A673 (cell line): ENCODE measurements at regions of chr4 and their contacts with region 1.

Region 1: DNA sequence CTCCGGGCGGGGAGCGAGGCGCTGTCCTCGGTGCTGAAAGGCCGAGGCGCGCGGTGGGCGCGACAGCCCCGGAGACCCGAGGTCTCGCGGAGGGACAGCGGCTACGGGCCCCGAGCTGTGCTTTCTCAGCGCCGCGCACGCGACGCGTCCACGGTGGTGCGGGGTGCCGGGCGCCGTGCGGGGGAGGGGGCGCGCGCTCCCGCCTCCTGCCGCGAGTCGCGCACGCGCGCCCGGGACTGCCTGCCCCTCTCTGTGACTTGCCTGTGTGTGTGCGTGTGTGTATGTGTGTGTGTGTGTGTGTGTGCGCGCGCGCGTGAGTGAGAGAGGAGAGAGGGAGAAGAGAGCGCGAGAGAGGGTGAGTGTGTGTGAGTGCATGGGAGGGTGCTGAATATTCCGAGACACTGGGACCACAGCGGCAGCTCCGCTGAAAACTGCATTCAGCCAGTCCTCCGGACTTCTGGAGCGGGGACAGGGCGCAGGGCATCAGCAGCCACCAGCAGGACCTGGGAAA is at the start of gene GRIA2:
- DNase-seq: peak; percentile 80
- H3K4me3 ChIP-seq: peak within 1 kb of the TSS; percentile 59
- H3K27ac ChIP-seq: no peak within 1 kb of the TSS
- H3K4me1 ChIP-seq: peaks cover 6% of the 10 kb centered on the region
- H3K27me3 ChIP-seq: peaks cover 23% of the 10 kb centered on the region
- CTCF ChIP-seq: no peak
- total RNA-seq, gene GRIA2: 0.32 and 0.42 TPM in 2 replicates

Region 2: GRCh38 chr4:156870131-156870530 is 350.3 kb before region 1 on chr4:
- CTCF ChIA-PET with region 1: no interaction called
- POLR2A ChIA-PET with region 1: no interaction called
- intact Hi-C with region 1: no loop called
- DNase-seq: no peak
- H3K4me3 ChIP-seq: peak overlapping the region; percentile 9
- H3K27ac ChIP-seq: peak overlapping the region; percentile 69
- H3K4me1 ChIP-seq: peaks cover 46% of the 10 kb centered on the region
- H3K27me3 ChIP-seq: no peaks in the 10 kb centered on the region
- CTCF ChIP-seq: no peak

Region 3: GRCh38 chr4:157165935-157166610 is 54.4 kb before region 1 on chr4:
- CTCF ChIA-PET with region 1: no interaction called
- POLR2A ChIA-PET with region 1: no interaction called
- intact Hi-C with region 1: loop called (anchors 2 kb)
- DNase-seq: no peak
- H3K4me3 ChIP-seq: no peak overlapping the region
- H3K27ac ChIP-seq: no peak overlapping the region
- H3K4me1 ChIP-seq: peaks cover 10% of the 10 kb centered on the region
- H3K27me3 ChIP-seq: no peaks in the 10 kb centered on the region
- CTCF ChIP-seq: no peak

Region 4: GRCh38 chr4:157514711-157515110 is 294.3 kb after region 1 on chr4:
- CTCF ChIA-PET with region 1: no interaction called
- POLR2A ChIA-PET with region 1: no interaction called
- intact Hi-C with region 1: loop called (anchors 5 kb)
- DNase-seq: peak; percentile 19
- H3K4me3 ChIP-seq: no peak overlapping the region
- H3K27ac ChIP-seq: no peak overlapping the region
- H3K4me1 ChIP-seq: no peaks in the 10 kb centered on the region
- H3K27me3 ChIP-seq: no peaks in the 10 kb centered on the region
- CTCF ChIP-seq: peak; percentile 52

Region 5: DNA sequence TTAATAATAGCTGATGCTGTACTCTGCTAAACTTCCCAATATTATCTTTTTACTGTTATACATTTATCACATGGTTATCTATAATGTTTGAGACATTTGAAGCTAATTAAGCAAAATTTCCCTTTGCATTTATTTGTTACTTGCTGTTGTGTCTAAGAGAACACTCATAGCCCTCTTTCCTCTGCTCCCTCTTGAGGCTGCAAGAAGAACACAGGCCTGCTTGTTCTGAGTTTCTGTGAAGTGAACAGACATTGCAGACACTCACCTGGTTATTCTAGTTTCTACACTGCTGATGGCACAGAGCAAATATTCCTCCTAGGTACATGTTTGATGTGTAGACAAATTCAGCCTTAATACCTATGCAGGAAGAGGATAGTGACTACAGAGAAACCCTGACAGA is 584.6 kb after region 1 on chr4:
- CTCF ChIA-PET with region 1: no interaction called
- POLR2A ChIA-PET with region 1: no interaction called
- intact Hi-C with region 1: loop called (anchors 10 kb)
- DNase-seq: peak; percentile 9
- H3K4me3 ChIP-seq: no peak overlapping the region
- H3K27ac ChIP-seq: no peak overlapping the region
- H3K4me1 ChIP-seq: peaks cover 23% of the 10 kb centered on the region
- H3K27me3 ChIP-seq: no peaks in the 10 kb centered on the region
- CTCF ChIP-seq: peak; percentile 56

Region 6: GRCh38 chr4:157978680-157979361 is 758.4 kb after region 1 on chr4:
- CTCF ChIA-PET with region 1: interaction called, 3 read pairs
- POLR2A ChIA-PET with region 1: no interaction called
- intact Hi-C with region 1: loop called (anchors 2 kb)
- DNase-seq: peak; percentile 89
- H3K4me3 ChIP-seq: peak overlapping the region; percentile 23
- H3K27ac ChIP-seq: no peak overlapping the region
- H3K4me1 ChIP-seq: peaks cover 22% of the 10 kb centered on the region
- H3K27me3 ChIP-seq: no peaks in the 10 kb centered on the region
- CTCF ChIP-seq: peak; percentile 85

Region 7: DNA sequence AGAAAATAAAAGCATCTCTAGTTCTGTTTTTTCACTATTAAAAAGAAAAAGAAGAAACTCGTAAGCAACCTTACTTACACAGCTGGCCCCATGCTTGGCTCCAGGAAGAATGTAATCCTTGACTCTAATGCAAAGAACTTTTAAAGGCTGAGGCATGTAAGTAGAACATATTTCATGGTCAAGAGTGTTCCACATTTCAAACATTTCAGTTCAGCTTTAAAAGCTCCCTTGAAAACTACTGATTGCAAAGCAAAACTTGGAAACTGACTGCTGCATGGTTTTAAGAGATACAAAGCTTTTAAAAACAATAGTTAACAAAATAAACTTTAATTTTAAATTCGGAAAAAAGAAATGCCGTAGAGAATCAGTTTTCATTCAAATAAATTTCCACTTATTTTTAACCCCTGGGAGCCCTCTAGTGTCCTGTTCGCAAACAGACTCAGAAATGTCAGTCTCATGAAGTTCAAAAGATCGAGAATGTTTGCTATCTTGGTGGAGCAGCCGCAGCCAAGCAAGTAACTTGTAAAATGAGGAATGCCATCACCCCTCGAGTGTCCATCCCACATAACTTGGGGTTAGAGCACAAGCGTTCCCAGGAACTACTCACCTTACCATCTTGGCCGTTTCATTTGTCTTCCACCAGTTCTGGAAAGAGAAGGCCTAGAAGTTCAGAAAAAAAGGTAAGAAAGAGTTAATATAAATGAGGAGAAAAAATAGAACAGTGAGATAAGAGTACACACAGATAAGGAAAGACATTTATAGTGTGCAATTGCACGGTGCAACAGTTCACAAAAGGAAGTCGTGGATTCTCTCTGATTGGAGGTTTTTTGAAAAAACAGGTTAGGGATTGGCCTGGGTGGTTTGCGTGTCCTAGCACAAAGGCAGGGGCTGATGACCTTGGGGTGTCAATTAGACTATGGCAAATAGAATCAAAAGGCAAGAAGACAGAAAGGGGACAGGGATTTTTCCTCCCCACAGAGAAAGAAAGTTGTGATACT is 952.1 kb after region 1 on chr4 and contains the start of gene GASK1B:
- CTCF ChIA-PET with region 1: interaction called, 3 read pairs
- POLR2A ChIA-PET with region 1: no interaction called
- intact Hi-C with region 1: loop called (anchors 5 kb)
- DNase-seq: peak; percentile 76
- H3K4me3 ChIP-seq: peak within 1 kb of the TSS; percentile 34
- H3K27ac ChIP-seq: peak within 1 kb of the TSS; percentile 62
- H3K4me1 ChIP-seq: peaks cover 19% of the 10 kb centered on the region
- H3K27me3 ChIP-seq: no peaks in the 10 kb centered on the region
- CTCF ChIP-seq: peak; percentile 81
- total RNA-seq, gene GASK1B: 3.1 and 3.8 TPM in 2 replicates